IMR-90 (cell line): ENCODE measurements at regions of chr3 and their contacts with region 1.

Region 1: DNA sequence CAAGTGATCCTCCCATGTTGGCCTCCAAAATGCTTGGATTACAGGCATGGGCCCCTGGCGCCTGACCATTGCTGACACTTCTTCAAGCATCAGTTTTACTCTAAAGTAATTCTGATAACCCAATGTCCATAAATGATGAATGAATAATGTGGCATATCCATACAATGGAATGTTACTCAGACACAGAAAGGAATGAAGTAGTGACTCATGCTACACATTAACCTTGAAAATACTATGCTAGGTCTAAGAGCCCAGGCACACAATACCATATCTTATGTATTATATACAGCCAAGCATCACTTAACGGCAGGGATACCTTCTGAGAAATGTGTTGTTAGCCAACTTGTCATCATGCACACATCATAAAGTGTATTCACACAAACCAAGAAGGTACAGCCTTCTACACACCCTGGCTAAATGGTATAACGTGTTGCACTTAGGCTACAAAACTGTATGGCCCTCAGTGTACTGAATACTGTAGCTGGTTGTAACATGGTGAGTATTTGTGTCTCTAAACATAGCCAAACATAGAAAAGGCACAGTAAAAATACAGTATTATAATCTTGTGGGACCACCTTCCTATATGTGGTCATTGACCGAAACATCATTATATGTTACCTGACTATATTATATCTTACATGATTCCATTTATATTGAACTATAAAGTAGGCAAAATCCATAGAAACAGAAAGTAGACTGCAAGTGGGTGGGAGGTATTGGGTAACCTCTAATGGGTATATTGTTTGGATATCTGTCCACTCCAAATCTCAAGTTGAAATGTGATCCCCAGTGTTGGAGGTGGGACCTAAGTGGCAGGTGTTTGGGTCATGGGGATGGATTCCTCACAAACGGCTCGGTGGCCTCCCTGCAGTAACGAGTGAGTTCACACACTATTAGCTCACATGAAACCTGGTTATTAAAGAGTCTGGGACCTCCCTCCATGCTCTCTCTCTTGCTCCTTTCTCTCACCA is 31.4 kb downstream of the MKRN2 start:
- DNase-seq: peak; percentile 52
- ATAC-seq: peak; percentile 70
- H3K4me3 ChIP-seq: no peak overlapping the region
- H3K27ac ChIP-seq: peak overlapping the region; percentile 15; the same call in 1 of the 2 replicates
- H3K4me1 ChIP-seq: peaks cover 4% of the 10 kb centered on the region; the same call in 1 of the 2 replicates
- H3K27me3 ChIP-seq: no peaks in the 10 kb centered on the region
- CTCF ChIP-seq: no peak
- POLR2A ChIP-seq: no peak
- RAD21 ChIP-seq: no peak

Region 2: GRCh38 chr3:12473511-12473910 is 114.8 kb before region 1 on chr3:
- CTCF ChIA-PET with region 1: interaction called, 12 read pairs
- POLR2A ChIA-PET with region 1: no interaction called
- dilution Hi-C with region 1: no loop called
- in situ Hi-C with region 1: no loop called
- intact Hi-C with region 1: no loop called
- DNase-seq: no peak
- ATAC-seq: no peak
- H3K4me3 ChIP-seq: no peak overlapping the region
- H3K27ac ChIP-seq: no peak overlapping the region
- H3K4me1 ChIP-seq: peaks cover 8% of the 10 kb centered on the region
- H3K27me3 ChIP-seq: no peaks in the 10 kb centered on the region
- CTCF ChIP-seq: no peak
- POLR2A ChIP-seq: no peak
- RAD21 ChIP-seq: no peak

Region 3: GRCh38 chr3:12495749-12496452 is 92.4 kb before region 1 on chr3:
- CTCF ChIA-PET with region 1: no interaction called
- POLR2A ChIA-PET with region 1: interaction called, 13 read pairs
- dilution Hi-C with region 1: no loop called
- in situ Hi-C with region 1: no loop called
- intact Hi-C with region 1: no loop called
- DNase-seq: no peak
- ATAC-seq: no peak
- H3K4me3 ChIP-seq: no peak overlapping the region
- H3K27ac ChIP-seq: no peak overlapping the region
- H3K4me1 ChIP-seq: no peaks in the 10 kb centered on the region
- H3K27me3 ChIP-seq: no peaks in the 10 kb centered on the region
- CTCF ChIP-seq: no peak
- POLR2A ChIP-seq: no peak
- RAD21 ChIP-seq: no peak

Region 4: DNA sequence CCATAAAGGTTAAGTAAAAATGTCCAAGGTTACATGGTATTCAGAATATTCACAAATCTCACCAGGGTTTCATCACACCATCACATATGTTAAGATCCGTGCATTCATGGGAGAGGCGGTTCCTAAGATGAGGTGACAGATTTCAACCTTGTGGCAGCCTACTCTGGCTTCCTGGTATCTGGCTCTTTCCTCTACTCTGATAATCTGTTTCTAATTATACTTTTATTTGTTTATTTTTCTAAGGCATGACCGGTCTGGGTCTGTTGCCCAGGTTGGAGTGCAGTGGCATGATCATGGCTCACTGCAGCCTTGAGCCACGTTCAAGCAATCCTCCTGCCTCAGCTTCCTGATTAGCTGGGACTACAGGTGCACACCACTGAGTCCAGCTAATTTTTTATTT is 41.2 kb after region 1 on chr3:
- CTCF ChIA-PET with region 1: no interaction called
- POLR2A ChIA-PET with region 1: no interaction called
- dilution Hi-C with region 1: no loop called
- in situ Hi-C with region 1: no loop called
- intact Hi-C with region 1: no loop called
- DNase-seq: peak; percentile 59
- ATAC-seq: peak; percentile 50; the same call in 1 of the 2 replicates
- H3K4me3 ChIP-seq: no peak overlapping the region
- H3K27ac ChIP-seq: no peak overlapping the region
- H3K4me1 ChIP-seq: peaks cover 11% of the 10 kb centered on the region
- H3K27me3 ChIP-seq: no peaks in the 10 kb centered on the region
- CTCF ChIP-seq: no peak
- POLR2A ChIP-seq: no peak
- RAD21 ChIP-seq: no peak

Region 5: GRCh38 chr3:12663936-12664908 is 75.9 kb after region 1 on chr3 and contains the start of gene RAF1:
- CTCF ChIA-PET with region 1: no interaction called
- POLR2A ChIA-PET with region 1: no interaction called
- dilution Hi-C with region 1: no loop called
- in situ Hi-C with region 1: no loop called
- intact Hi-C with region 1: loop called (anchors 5 kb)
- DNase-seq: peak; percentile 98
- ATAC-seq: peak; percentile 92
- H3K4me3 ChIP-seq: peak within 1 kb of the TSS; percentile 76
- H3K27ac ChIP-seq: peak within 1 kb of the TSS; percentile 95
- H3K4me1 ChIP-seq: peaks cover 9% of the 10 kb centered on the region
- H3K27me3 ChIP-seq: no peaks in the 10 kb centered on the region
- CTCF ChIP-seq: no peak
- POLR2A ChIP-seq: peak; percentile 88
- RAD21 ChIP-seq: 0 out of 2 replicates have a peak, but pooled peaks have one; percentile 11
- total RNA-seq, gene RAF1: 128 and 151 TPM in 2 replicates